Activated T-helper 2 cell treated with anti-CD3 and anti-CD28 coated beads, Interferon-gamma antibody, Interleukin-2, Interleukin-4, amounts not matched to agents 10 μg/mL and 5 μg/mL and 100 μg/mL, durations not matched to agents 14 hours and 24 hours and 36 hours (primary cell): ENCODE measurements at regions of chr6 and their contacts with region 1.

Region 1: DNA sequence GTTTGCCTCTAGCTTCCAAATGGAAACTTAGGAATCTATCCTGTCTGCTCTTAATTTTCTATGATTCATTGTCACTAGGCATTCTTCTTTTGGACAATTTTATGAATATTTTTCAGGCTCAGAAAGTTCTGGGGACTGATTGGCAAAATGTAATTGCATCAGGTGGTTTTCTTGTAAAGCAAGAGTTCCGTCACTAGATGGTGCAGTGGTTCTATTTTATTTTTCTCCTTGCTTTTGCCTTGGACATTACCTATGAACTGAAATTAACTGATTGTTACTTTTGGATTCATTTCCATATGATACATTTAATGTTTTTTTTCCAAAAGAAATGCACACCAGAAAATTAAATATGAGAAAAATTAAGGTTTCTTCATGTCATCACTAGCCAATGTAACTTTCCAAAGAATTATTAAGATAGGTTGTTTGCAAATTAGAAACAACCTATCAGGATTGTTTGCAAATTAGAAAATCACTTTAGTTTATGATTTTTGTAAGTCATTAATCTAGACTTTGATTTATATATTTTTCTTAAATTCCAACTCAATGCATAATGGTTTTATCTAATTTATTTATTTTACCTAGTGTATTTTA is 48.0 kb downstream of the TMEM170B start:
- DNase-seq: no peak
- H3K4me3 Mint-ChIP-seq: no peak overlapping the region
- H3K27ac Mint-ChIP-seq: no peak overlapping the region
- H3K4me1 Mint-ChIP-seq: no peaks in the 10 kb centered on the region
- H3K27me3 Mint-ChIP-seq: peaks cover 8% of the 10 kb centered on the region

Region 2: GRCh38 chr6:12605888-12606345 is 1020.4 kb after region 1 on chr6:
- intact Hi-C with region 1: loop called (anchors 5 kb)
- DNase-seq: peak; percentile 22
- H3K4me3 Mint-ChIP-seq: peak overlapping the region; percentile 38
- H3K27ac Mint-ChIP-seq: no peak overlapping the region
- H3K4me1 Mint-ChIP-seq: peaks cover 9% of the 10 kb centered on the region
- H3K27me3 Mint-ChIP-seq: peaks cover 10% of the 10 kb centered on the region

Region 3: DNA sequence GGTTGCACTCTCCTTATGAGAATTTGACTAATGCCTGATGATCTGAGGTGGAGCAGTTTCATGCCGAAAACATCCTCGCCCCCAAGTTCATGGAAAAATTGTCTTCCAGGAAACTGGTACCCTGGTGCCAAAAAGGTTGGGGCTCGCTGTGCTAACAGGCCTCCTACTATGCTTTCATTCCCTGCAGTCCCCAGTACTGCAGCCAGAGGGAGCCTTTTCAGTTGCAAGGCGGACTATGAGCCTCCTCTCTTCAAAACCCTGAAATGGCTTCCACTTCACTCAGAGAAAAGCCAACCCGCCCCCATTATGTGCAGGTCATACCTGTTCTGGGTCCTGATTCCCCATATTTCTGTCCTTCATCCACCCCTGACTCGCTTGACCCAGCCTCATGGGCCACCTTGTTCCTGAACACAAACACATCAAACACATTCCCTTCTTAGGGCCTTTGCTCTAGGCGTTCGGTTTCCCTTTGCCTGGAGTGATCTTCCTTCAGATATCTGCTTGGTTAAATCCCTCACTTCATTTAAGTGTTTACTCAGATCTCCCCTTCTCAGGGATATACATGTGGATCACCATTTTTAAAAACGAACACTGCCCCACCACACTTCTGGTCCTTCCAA is 1304.8 kb after region 1 on chr6:
- intact Hi-C with region 1: loop called (anchors 10 kb)
- DNase-seq: no peak
- H3K4me3 Mint-ChIP-seq: no peak overlapping the region
- H3K27ac Mint-ChIP-seq: no peak overlapping the region
- H3K4me1 Mint-ChIP-seq: no peaks in the 10 kb centered on the region
- H3K27me3 Mint-ChIP-seq: no peaks in the 10 kb centered on the region